ENCODE measurements at regions of chr19 and their contacts with region 1.

Region 1: GRCh38 chr19:3387645-3388589 is 21.5 kb downstream of the NFIC start:
- DNase-seq: peak; percentile 94
- H3K4me3 Mint-ChIP-seq: peak overlapping the region; percentile 23
- H3K27ac Mint-ChIP-seq: peak overlapping the region; percentile 60
- H3K4me1 Mint-ChIP-seq: peaks cover 14% of the 10 kb centered on the region
- H3K27me3 Mint-ChIP-seq: no peaks in the 10 kb centered on the region
- CTCF ChIP-seq: no peak

Region 2: GRCh38 chr19:2983351-2984195 is 404.3 kb before region 1 on chr19:
- CTCF ChIA-PET with region 1: no interaction called
- POLR2A ChIA-PET with region 1: no interaction called
- intact Hi-C with region 1: no loop called
- DNase-seq: peak; percentile 56
- H3K4me3 Mint-ChIP-seq: peak overlapping the region; percentile 17
- H3K27ac Mint-ChIP-seq: peak overlapping the region; percentile 78
- H3K4me1 Mint-ChIP-seq: peaks cover 22% of the 10 kb centered on the region
- H3K27me3 Mint-ChIP-seq: no peaks in the 10 kb centered on the region
- CTCF ChIP-seq: no peak

Region 3: GRCh38 chr19:3163230-3163886 is 224.6 kb before region 1 on chr19:
- CTCF ChIA-PET with region 1: no interaction called
- POLR2A ChIA-PET with region 1: no interaction called
- intact Hi-C with region 1: no loop called
- DNase-seq: peak; percentile 66
- H3K4me3 Mint-ChIP-seq: no peak overlapping the region
- H3K27ac Mint-ChIP-seq: no peak overlapping the region
- H3K4me1 Mint-ChIP-seq: peaks cover 5% of the 10 kb centered on the region
- H3K27me3 Mint-ChIP-seq: no peaks in the 10 kb centered on the region
- CTCF ChIP-seq: peak; percentile 93

Region 4: DNA sequence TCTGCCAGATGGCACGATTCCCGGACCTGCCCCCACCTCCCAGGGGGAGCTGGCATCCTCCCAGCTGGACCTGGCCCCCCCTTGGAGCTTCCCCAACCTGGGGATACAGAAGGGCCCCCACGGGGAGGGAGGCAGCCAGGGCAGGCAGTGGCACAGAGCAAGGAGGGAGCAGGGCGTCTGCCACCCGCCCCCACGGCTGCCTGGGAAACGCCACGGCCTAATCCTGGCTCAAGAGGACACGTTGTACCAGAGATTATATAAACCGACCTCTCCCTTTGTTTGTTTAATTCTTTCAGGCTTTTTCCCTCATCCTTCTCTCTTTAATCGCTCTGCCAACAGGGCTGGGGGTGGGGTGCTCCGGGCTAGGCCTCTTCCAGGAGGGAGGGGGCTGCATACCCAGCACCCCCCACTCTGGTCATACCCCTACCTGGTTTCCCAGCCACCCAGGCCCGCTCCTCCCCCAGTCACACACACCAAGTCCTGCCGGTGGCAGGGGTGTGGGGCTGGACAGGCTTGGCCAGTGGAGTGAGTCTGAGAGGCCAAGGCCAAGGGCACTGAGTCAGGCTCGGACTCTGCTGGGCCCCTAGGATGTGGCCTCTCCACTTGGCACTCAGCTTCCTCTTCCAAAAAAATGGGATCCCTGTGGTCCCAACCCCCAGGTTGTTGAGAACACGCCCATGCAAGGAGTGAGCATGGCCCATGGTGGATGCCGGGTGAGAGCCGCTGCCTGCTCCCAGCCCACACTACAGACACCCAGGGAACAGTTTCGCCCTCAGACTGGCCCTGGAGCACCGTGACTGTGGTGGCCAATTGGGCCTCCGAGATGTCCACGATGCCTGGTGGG is 51.0 kb before region 1 on chr19:
- CTCF ChIA-PET with region 1: no interaction called
- POLR2A ChIA-PET with region 1: interaction called, 10 read pairs
- intact Hi-C with region 1: no loop called
- DNase-seq: peak; percentile 98
- H3K4me3 Mint-ChIP-seq: peak overlapping the region; percentile 55
- H3K27ac Mint-ChIP-seq: peak overlapping the region; percentile 99
- H3K4me1 Mint-ChIP-seq: peaks cover 48% of the 10 kb centered on the region
- H3K27me3 Mint-ChIP-seq: peaks cover 13% of the 10 kb centered on the region
- CTCF ChIP-seq: no peak

Region 5: DNA sequence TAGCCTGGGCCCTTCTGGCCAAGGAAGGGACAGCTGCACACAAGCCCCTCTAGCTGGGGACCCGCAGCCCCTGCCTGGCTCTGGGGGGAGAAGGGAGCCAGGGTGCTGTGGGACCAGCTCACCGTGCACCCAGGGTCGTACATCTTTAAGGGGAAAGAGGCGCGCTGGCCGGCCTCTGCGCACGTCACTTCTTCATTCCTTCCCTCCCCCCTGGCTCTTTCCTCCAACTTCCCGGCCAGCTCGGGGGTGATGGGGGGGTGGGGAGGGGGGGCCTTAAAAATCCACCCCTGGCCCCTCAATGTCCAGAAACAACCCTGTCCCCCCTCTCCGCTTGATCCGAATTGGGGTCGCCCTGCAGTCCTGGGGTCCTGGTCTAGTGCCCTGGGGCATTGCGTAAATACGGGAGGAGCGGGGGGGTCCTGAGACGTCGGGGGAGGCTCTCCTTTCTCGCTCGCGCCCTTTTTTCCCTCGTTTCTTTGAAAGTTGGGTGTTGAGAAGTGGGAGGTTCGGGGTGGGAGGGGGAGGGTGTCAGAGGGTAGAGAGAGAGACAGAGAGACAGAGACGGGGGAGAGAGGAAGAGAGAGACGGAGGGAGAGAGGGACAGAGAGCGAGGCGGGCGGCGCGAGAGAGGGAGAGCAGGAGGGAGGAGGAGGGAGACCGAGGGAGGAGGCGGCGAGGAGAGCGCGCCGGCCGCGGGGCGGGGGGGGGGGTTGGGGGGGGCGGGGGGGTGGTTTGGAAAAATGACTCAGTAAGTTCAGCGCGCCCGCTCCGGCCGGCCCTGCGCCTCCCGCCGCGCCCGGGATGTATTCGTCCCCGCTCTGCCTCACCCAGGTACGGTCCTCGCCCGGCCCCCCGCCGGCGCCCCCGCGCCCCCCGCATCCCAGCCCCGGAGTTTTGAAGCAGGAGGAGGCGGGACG is 21.8 kb before region 1 on chr19 and contains the start of gene NFIC:
- CTCF ChIA-PET with region 1: interaction called, 5 read pairs
- POLR2A ChIA-PET with region 1: interaction called, 11 read pairs
- intact Hi-C with region 1: no loop called
- DNase-seq: peak; percentile 90
- H3K4me3 Mint-ChIP-seq: peak within 1 kb of the TSS; percentile 81
- H3K27ac Mint-ChIP-seq: no peak within 1 kb of the TSS
- H3K4me1 Mint-ChIP-seq: peaks cover 62% of the 10 kb centered on the region
- H3K27me3 Mint-ChIP-seq: no peaks in the 10 kb centered on the region
- CTCF ChIP-seq: no peak
- total RNA-seq, gene NFIC: 83.4 and 85.5 TPM in 2 replicates

Region 6: GRCh38 chr19:3398114-3398899 is 10.4 kb after region 1 on chr19:
- CTCF ChIA-PET with region 1: interaction called, 9 read pairs
- POLR2A ChIA-PET with region 1: interaction called, 12 read pairs
- intact Hi-C with region 1: no loop called
- DNase-seq: no peak
- H3K4me3 Mint-ChIP-seq: no peak overlapping the region
- H3K27ac Mint-ChIP-seq: peak overlapping the region; percentile 19
- H3K4me1 Mint-ChIP-seq: peaks cover 17% of the 10 kb centered on the region
- H3K27me3 Mint-ChIP-seq: no peaks in the 10 kb centered on the region
- CTCF ChIP-seq: no peak